Activated CD4-positive, alpha-beta memory T cell treated with anti-CD3 and anti-CD28 coated beads for 36 hours (primary cell): ENCODE measurements at regions of chr10 and their contacts with region 1.

Region 1: DNA sequence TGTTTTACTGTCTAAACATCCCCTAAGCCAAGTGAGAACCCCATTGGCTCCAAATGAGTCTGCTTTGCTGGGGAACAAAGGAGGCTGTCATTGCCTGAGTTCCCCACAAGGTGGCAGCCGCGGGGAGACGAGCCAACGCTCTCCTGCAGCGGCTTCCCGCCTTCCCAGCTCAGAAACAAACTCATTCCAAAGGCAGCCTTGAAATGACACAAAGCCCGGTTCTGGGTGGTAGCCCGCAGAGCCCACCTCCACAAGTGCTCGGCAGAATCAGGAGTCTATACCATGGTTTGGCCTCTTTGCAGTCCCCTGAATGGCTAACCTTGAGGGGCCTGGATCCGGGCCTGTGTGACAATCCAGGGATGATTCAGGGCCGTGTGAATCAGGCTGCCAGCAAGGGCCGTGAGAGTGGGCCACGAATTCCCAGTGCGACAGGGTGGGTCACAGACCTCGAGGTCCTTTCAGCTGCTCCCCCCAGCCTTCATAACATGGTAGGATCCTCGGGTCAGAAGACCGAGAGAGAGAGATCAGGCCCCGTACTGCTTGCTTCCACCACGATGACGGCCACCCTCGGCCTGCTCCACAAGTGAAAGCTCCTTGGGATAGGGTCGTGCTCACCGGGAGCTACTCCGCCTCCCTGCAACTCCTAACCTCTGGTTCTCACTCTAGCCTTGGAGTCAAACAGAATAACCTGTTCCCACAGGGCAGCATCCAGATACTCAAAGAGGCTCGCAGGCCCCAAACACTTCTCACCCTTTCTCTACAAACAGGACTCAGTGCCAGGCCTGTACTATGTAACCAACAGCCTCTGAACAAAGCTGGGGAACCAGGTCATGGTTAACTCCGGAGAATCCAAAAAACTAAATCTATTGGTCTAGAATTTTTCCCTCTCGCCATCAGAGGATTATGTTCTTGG is 79.6 kb downstream of the DLG5 start:
- DNase-seq: peak; percentile 74
- H3K4me3 Mint-ChIP-seq: no peak overlapping the region
- H3K27ac Mint-ChIP-seq: no peak overlapping the region
- H3K4me1 Mint-ChIP-seq: no peaks in the 10 kb centered on the region
- H3K27me3 Mint-ChIP-seq: no peaks in the 10 kb centered on the region

Region 2: GRCh38 chr10:77974396-77975074 is 127.6 kb after region 1 on chr10:
- CTCF ChIA-PET with region 1: interaction called, 14 read pairs
- POLR2A ChIA-PET with region 1: no interaction called
- intact Hi-C with region 1: no loop called
- DNase-seq: no peak
- H3K4me3 Mint-ChIP-seq: no peak overlapping the region
- H3K27ac Mint-ChIP-seq: no peak overlapping the region
- H3K4me1 Mint-ChIP-seq: peaks cover 10% of the 10 kb centered on the region
- H3K27me3 Mint-ChIP-seq: no peaks in the 10 kb centered on the region